ENCODE measurements at regions of chr9 and their contacts with region 1.

Region 1: GRCh38 chr9:34072868-34073590 is 24.3 kb upstream of the UBAP2 start:
- DNase-seq: peak; percentile 20

Region 2: GRCh38 chr9:33924978-33925797 is 147.8 kb before region 1 on chr9:
- intact Hi-C with region 1: loop called in 1 of 2 experiments (anchors 10 kb)
- DNase-seq: peak; percentile 75